B cell (primary cell): ENCODE measurements at regions of chrX and their contacts with region 1.

Region 1: GRCh38 chrX:46967547-46967946 is 55.3 kb downstream of the JADE3 start:
- DNase-seq: peak; percentile 50
- ATAC-seq: peak; percentile 44
- H3K4me3 ChIP-seq: no peak overlapping the region
- H3K4me3 Mint-ChIP-seq: peak overlapping the region; percentile 86
- H3K27ac ChIP-seq: peak overlapping the region; percentile 58 to 84
- H3K27ac Mint-ChIP-seq: peak overlapping the region; percentile 96
- H3K4me1 ChIP-seq: peaks cover 61 to 73% of the 10 kb centered on the region in 2 donors
- H3K4me1 Mint-ChIP-seq: peaks cover 76% of the 10 kb centered on the region
- H3K27me3 ChIP-seq: no peaks in the 10 kb centered on the region
- H3K27me3 Mint-ChIP-seq: no peaks in the 10 kb centered on the region
- CTCF ChIP-seq: no peak

Region 2: GRCh38 chrX:46805270-46805669 is 162.3 kb before region 1 on chrX:
- CTCF ChIA-PET with region 1: no interaction called
- POLR2A ChIA-PET with region 1: no interaction called
- intact Hi-C with region 1: no loop called
- DNase-seq: no peak
- ATAC-seq: no peak
- H3K4me3 ChIP-seq: no peak overlapping the region
- H3K4me3 Mint-ChIP-seq: no peak overlapping the region
- H3K27ac ChIP-seq: no peak overlapping the region
- H3K27ac Mint-ChIP-seq: no peak overlapping the region
- H3K4me1 ChIP-seq: no peaks in the 10 kb centered on the region
- H3K4me1 Mint-ChIP-seq: no peaks in the 10 kb centered on the region
- H3K27me3 ChIP-seq: no peaks in the 10 kb centered on the region
- H3K27me3 Mint-ChIP-seq: no peaks in the 10 kb centered on the region
- CTCF ChIP-seq: no peak

Region 3: DNA sequence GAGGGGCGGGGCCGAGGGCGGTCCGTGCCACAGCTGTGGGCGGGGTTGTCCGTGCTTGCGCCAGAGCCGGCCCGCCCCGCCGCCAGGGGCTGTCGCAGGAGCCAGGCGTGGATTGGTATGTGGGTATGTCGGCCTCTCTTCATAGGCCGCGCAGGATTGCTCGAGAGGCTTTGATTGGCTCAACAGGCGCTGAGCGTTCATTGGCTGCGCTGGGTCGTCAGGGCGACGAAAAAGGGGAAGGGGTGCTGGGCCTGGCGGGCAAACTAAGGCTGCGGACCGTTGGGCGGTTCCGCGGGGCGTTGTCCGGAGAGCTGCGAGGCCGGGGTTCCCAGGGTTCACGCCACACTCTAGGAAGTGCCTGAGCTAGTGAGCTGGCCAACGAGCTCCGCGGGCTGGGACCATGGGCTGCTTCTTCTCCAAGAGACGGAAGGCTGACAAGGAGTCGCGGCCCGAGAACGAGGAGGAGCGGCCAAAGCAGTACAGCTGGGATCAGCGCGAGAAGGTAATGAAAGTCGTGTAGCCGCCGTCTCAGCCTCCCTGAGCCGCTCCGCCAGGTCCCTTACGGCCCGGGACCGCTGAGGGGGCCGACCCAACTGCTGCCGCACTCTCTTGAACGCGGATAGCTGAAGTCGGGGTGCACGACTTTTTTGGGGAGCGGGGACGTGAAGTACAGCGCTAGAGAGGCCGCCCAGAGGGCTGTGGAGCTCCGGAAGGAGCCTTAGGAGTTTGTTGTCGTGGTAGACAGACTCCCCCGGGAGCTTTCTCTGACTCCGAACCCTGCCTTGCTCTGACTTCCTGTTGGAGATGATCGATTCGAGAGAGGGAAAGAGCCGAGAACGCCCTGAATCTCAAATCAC is 130.6 kb before region 1 on chrX and contains the start of gene RP2:
- CTCF ChIA-PET with region 1: no interaction called
- POLR2A ChIA-PET with region 1: no interaction called
- intact Hi-C with region 1: loop called (anchors 10 kb)
- DNase-seq: peak; percentile 91
- ATAC-seq: peak; percentile 94
- H3K4me3 ChIP-seq: peak within 1 kb of the TSS; percentile 82 to 93 (median 83)
- H3K4me3 Mint-ChIP-seq: peak within 1 kb of the TSS; percentile 98
- H3K27ac ChIP-seq: peak within 1 kb of the TSS; percentile 75 to 87
- H3K27ac Mint-ChIP-seq: peak within 1 kb of the TSS; percentile 97
- H3K4me1 ChIP-seq: peaks cover 22 to 26% of the 10 kb centered on the region in 2 donors
- H3K4me1 Mint-ChIP-seq: peaks cover 30% of the 10 kb centered on the region
- H3K27me3 ChIP-seq: no peaks in the 10 kb centered on the region
- H3K27me3 Mint-ChIP-seq: no peaks in the 10 kb centered on the region
- CTCF ChIP-seq: no peak
- total RNA-seq, gene RP2: 14.5 and 14.9 TPM in 2 replicates

Region 4: DNA sequence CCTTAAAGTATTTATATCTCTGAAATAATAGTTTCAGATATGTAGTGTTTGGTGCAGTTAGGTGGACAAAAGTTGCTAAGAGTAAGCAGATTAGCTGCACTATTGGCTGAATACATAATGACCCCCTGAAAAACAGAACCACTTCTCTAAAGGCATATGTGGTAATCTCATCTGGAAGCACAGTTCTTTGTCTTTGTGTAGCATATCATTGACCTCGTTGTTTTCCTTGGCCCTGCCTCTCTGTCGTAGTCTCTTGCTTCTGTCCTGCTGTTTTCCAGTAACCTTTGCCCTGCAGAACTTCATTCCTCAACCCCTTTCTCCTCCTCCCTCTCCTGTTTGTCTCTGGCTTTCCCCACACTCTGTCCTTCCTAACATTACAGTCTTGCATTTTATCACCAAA is 13.9 kb before region 1 on chrX:
- CTCF ChIA-PET with region 1: interaction called, 4 read pairs
- POLR2A ChIA-PET with region 1: no interaction called
- intact Hi-C with region 1: loop called (anchors 2 kb)
- DNase-seq: peak; percentile 36
- ATAC-seq: peak; percentile 54
- H3K4me3 ChIP-seq: peak overlapping the region in 1 of 5 experiments; percentile 31
- H3K4me3 Mint-ChIP-seq: peak overlapping the region; percentile 76
- H3K27ac ChIP-seq: peak overlapping the region; percentile 65 to 74
- H3K27ac Mint-ChIP-seq: peak overlapping the region; percentile 85
- H3K4me1 ChIP-seq: peaks cover 33 to 53% of the 10 kb centered on the region in 2 donors
- H3K4me1 Mint-ChIP-seq: peaks cover 64% of the 10 kb centered on the region
- H3K27me3 ChIP-seq: no peaks in the 10 kb centered on the region
- H3K27me3 Mint-ChIP-seq: no peaks in the 10 kb centered on the region
- CTCF ChIP-seq: no peak

Region 5: DNA sequence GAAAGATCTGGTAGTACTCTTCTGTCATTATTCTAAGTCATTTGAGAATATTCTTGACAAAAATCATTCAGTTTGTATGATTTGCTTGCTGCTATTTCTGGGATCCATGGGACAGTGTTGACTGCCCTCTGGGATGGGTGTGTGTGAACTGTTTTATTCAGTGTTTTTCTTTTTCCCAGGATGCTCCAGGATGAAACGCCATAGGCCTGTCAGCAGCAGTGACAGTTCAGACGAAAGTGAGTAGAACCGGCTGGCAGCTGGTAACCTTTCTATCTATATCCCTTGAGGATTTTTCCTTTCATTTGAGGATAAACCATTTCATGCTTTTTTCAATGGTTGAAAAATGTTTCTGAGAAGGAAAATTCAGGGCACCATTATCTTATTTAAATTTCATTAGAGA is 17.2 kb after region 1 on chrX:
- CTCF ChIA-PET with region 1: no interaction called
- POLR2A ChIA-PET with region 1: no interaction called
- intact Hi-C with region 1: no loop called
- DNase-seq: no peak
- ATAC-seq: no peak
- H3K4me3 ChIP-seq: no peak overlapping the region
- H3K4me3 Mint-ChIP-seq: no peak overlapping the region
- H3K27ac ChIP-seq: no peak overlapping the region
- H3K27ac Mint-ChIP-seq: no peak overlapping the region
- H3K4me1 ChIP-seq: no peaks in the 10 kb centered on the region
- H3K4me1 Mint-ChIP-seq: peaks cover 8% of the 10 kb centered on the region
- H3K27me3 ChIP-seq: no peaks in the 10 kb centered on the region
- H3K27me3 Mint-ChIP-seq: no peaks in the 10 kb centered on the region
- CTCF ChIP-seq: no peak

Region 6: GRCh38 chrX:47918274-47918673 is 950.7 kb after region 1 on chrX:
- CTCF ChIA-PET with region 1: no interaction called
- POLR2A ChIA-PET with region 1: no interaction called
- intact Hi-C with region 1: no loop called
- DNase-seq: no peak
- ATAC-seq: no peak
- H3K4me3 ChIP-seq: no peak overlapping the region
- H3K4me3 Mint-ChIP-seq: no peak overlapping the region
- H3K27ac ChIP-seq: no peak overlapping the region
- H3K27ac Mint-ChIP-seq: no peak overlapping the region
- H3K4me1 ChIP-seq: no peaks in the 10 kb centered on the region
- H3K4me1 Mint-ChIP-seq: no peaks in the 10 kb centered on the region
- H3K27me3 ChIP-seq: no peaks in the 10 kb centered on the region
- H3K27me3 Mint-ChIP-seq: no peaks in the 10 kb centered on the region
- CTCF ChIP-seq: no peak